ENCODE measurements at regions of chr13 and their contacts with region 1.

Region 1: GRCh38 chr13:49585220-49586157 is at the start of gene RCBTB1:
- DNase-seq: peak; percentile 79
- H3K4me3 ChIP-seq: peak within 1 kb of the TSS; percentile 70 to 89 (median 80)
- H3K27ac ChIP-seq: peak within 1 kb of the TSS; percentile 79 to 80 (median 80)
- H3K4me1 ChIP-seq: peaks cover 0 to 21% (median 14%) of the 10 kb centered on the region in 4 donors
- H3K27me3 ChIP-seq: no peaks in the 10 kb centered on the region
- CTCF ChIP-seq: no peak
- EP300 ChIP-seq: no peak
- POLR2A ChIP-seq: no peak
- total RNA-seq, gene RCBTB1: 10.2 to 20.7 (median 12.5) TPM

Region 2: DNA sequence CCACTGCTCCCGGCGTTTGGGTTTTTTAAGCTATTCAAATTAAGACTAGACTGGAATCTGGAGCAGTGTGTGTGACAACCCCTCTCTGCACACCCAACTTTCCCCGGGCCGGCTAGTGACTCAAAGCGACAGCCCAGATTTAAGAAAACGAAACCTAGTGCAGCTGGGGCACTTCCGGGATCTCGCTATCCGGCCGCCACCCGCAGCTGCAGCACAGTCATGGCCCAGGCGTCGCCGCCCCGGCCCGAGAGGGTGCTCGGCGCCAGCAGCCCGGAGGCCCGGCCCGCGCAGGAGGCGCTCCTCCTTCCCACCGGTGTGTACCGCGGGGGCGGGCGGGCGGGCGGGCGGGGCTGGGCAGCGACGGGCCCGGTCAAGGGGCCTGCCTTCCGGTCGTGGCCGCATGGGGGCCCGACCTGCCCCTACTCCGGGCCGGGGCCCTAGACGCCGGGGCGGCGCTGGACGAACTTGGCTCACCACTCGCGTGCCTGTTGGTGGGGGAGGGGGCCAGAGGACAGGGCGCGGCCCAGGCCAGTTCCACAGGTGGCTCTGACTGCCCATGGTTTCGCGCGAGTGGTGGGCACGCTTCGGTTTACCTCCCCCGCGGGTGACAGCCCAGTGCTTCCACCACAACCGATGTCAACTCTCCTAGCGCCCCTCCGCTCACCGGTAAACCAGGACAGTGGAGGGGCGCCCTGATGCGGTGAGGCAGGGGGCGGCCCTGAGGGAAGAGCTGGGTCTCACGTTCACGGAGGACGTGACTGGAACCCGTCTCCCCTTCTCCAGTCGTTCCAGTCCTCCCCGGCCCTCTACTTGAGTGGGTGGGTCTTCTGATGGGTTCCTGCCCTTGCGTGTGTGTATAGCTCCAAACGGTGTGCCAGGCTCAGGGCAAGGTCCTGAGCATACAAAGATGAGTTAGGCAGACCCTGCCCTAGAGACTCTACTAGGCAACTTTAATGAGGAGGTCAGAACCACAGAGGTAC is 89.4 kb before region 1 on chr13 and contains the start of gene PHF11:
- intact Hi-C with region 1: loop called (anchors 5 kb)
- DNase-seq: peak; percentile 89
- H3K4me3 ChIP-seq: peak within 1 kb of the TSS; percentile 55 to 69 (median 67)
- H3K27ac ChIP-seq: peak within 1 kb of the TSS; percentile 91 to 94 (median 93)
- H3K4me1 ChIP-seq: peaks cover 0 to 12% (median 5%) of the 10 kb centered on the region in 4 donors
- H3K27me3 ChIP-seq: no peaks in the 10 kb centered on the region
- CTCF ChIP-seq: peak in 1 of 4 experiments; percentile 20
- EP300 ChIP-seq: no peak
- POLR2A ChIP-seq: peak; percentile 21 to 36
- total RNA-seq, gene PHF11: 29.6 to 52.1 (median 37.5) TPM

Measured in sigmoid colon (tissue), 7 donors.